CD14-positive monocyte (primary cell): ENCODE measurements at regions of chr14 and their contacts with region 1.

Region 1: GRCh38 chr14:89416002-89416995 is 734 bp downstream of the FOXN3 start:
- DNase-seq: peak; percentile 95 to 98 (median 96)
- H3K4me3 ChIP-seq: peak overlapping the region; percentile 89 to 95 (median 90)
- H3K4me3 Mint-ChIP-seq: peak overlapping the region; percentile 92 to 94
- H3K27ac ChIP-seq: peak overlapping the region; percentile 80 to 92
- H3K27ac Mint-ChIP-seq: peak overlapping the region; percentile 88 to 96 (median 93)
- H3K4me1 ChIP-seq: peaks cover 37 to 55% of the 10 kb centered on the region in 2 donors
- H3K4me1 Mint-ChIP-seq: peaks cover 56% of the 10 kb centered on the region
- H3K27me3 ChIP-seq: no peaks in the 10 kb centered on the region
- H3K27me3 Mint-ChIP-seq: peaks cover 0 to 2% (median 0%) of the 10 kb centered on the region in 3 donors
- CTCF ChIP-seq: no peak

Region 2: DNA sequence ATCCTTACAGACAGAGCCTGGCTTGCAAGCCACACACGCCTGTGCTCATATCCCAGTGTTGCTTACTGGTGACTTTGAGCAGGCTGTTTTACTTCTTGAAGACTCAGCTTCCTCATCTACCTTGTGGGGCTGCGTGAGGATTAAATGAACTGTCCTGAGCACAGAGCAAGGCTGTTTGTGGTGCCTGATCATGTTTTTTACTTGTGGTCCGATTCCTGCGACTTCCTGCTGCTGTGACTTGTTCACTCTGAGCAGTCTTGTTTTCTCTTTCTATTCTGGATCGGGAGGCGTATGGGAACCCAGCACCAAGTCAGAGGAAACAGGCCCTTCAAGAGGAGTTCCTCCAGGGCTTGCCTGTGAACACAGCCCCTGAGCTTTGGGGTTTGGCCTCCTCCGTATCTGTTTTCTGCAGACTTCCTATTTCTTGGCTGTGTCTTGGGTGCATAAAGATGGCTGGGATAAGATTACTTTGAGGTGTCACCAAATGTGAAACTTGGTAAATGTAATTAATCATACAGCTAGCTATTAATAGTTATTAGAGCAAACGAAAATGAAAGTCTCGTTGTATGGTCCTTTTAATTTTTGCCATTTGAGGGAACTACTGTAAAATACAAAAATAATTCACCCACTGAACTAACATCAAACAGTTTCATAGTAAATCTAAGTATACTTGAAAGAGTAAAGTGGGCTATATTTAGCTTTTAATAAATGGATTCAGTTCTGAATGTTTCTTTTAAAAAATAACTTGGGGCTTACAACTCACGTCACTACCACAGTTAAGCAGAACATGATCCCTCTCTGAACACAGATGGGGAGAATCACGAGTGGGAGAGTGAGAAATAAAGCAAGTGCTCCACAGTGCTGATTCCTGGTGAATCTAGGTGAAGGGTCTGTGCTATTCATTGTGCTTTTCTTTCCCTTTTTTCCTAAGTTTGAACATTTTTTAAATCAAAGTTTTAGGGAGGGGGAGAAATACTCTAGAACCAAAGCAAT is 250.8 kb before region 1 on chr14:
- intact Hi-C with region 1: no loop called
- DNase-seq: peak; percentile 34 to 45 (median 35)
- H3K4me3 ChIP-seq: peak overlapping the region; percentile 56 to 84 (median 75)
- H3K4me3 Mint-ChIP-seq: peak overlapping the region; percentile 80 to 95
- H3K27ac ChIP-seq: peak overlapping the region; percentile 78 to 88
- H3K27ac Mint-ChIP-seq: peak overlapping the region; percentile 91 to 98 (median 94)
- H3K4me1 ChIP-seq: peaks cover 33 to 42% of the 10 kb centered on the region in 2 donors
- H3K4me1 Mint-ChIP-seq: peaks cover 47% of the 10 kb centered on the region
- H3K27me3 ChIP-seq: no peaks in the 10 kb centered on the region
- H3K27me3 Mint-ChIP-seq: peaks cover 0 to 3% (median 1%) of the 10 kb centered on the region in 3 donors
- CTCF ChIP-seq: no peak

Region 3: GRCh38 chr14:89303457-89304435 is 112.6 kb before region 1 on chr14:
- intact Hi-C with region 1: loop called in 1 of 2 experiments (anchors 10 kb)
- DNase-seq: peak; percentile 74 to 84 (median 82)
- H3K4me3 ChIP-seq: peak overlapping the region in 2 of 3 experiments; percentile 40 to 68
- H3K4me3 Mint-ChIP-seq: peak overlapping the region; percentile 72 to 75
- H3K27ac ChIP-seq: peak overlapping the region; percentile 89 to 90
- H3K27ac Mint-ChIP-seq: peak overlapping the region; percentile 85 to 98 (median 93)
- H3K4me1 ChIP-seq: peaks cover 48 to 49% of the 10 kb centered on the region in 2 donors
- H3K4me1 Mint-ChIP-seq: peaks cover 59% of the 10 kb centered on the region
- H3K27me3 ChIP-seq: no peaks in the 10 kb centered on the region
- H3K27me3 Mint-ChIP-seq: peaks cover 0 to 2% (median 0%) of the 10 kb centered on the region in 3 donors
- CTCF ChIP-seq: no peak

Region 4: GRCh38 chr14:89455412-89455811 is 39.1 kb after region 1 on chr14:
- intact Hi-C with region 1: loop called in 1 of 2 experiments (anchors 5 kb)
- DNase-seq: no peak
- H3K4me3 ChIP-seq: no peak overlapping the region
- H3K4me3 Mint-ChIP-seq: no peak overlapping the region
- H3K27ac ChIP-seq: no peak overlapping the region
- H3K27ac Mint-ChIP-seq: peak overlapping the region in 1 of 7 donors; percentile 55
- H3K4me1 ChIP-seq: peaks cover 44 to 50% of the 10 kb centered on the region in 2 donors
- H3K4me1 Mint-ChIP-seq: peaks cover 55% of the 10 kb centered on the region
- H3K27me3 ChIP-seq: no peaks in the 10 kb centered on the region
- H3K27me3 Mint-ChIP-seq: peaks cover 0 to 1% (median 0%) of the 10 kb centered on the region in 3 donors
- CTCF ChIP-seq: no peak

Region 5: GRCh38 chr14:89618811-89619551 is 202.7 kb after region 1 on chr14:
- intact Hi-C with region 1: loop called (anchors 5 to 10 kb)
- DNase-seq: peak; percentile 50 to 54 (median 52)
- H3K4me3 ChIP-seq: peak overlapping the region; percentile 88 to 100 (median 96)
- H3K4me3 Mint-ChIP-seq: peak overlapping the region; percentile 88 to 96
- H3K27ac ChIP-seq: peak overlapping the region in 1 of 2 donors; percentile 90
- H3K27ac Mint-ChIP-seq: peak overlapping the region; percentile 81 to 93 (median 88)
- H3K4me1 ChIP-seq: peaks cover 29 to 47% of the 10 kb centered on the region in 2 donors
- H3K4me1 Mint-ChIP-seq: peaks cover 57% of the 10 kb centered on the region
- H3K27me3 ChIP-seq: no peaks in the 10 kb centered on the region
- H3K27me3 Mint-ChIP-seq: peaks cover 1 to 6% (median 2%) of the 10 kb centered on the region in 3 donors
- CTCF ChIP-seq: no peak

Region 6: DNA sequence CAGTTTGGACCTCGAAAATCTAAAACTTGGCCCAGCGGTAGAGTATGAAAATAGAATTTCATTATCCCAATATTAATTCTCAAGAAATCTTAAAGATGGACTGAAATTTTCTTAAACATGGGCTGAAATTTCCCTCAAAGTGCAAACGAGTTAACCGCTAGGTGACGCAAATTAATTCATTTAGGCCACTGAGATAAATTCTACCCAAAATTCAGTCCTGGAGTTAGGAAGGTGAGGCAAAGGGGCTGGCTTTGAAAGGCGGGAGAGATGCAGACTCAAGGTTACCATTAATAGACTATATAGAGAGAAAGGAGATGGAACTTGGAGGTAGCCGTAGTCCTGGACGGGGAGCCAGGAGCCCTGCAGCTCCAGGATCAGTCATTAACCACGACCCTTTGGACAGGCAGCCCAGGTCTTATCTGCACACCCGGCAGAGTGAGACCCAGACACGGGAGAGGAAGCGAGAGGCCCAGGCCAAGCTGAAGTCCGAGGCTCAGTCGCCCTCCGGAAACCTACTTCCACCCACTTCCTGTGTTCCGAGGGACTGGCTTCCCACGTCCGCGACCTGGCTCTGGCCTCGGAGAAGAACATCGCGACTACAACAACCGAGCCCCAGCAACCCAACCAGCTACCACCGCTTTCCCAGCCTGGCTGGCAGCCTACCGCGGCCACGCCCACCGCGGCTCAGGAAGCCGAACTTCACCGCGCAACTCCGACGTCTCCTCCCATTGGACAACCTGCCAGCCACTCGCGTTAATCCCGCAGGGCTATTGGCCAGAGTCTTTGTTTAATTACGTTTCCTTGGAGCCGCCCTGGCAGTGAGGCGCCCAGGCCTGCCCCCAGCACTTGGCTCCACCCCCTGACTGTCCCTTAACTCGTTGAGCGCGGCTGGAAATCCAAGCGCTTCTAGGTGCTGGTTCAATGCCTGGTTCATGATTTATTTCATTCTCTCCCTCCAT is 538.0 kb after region 1 on chr14 and contains the start of gene EFCAB11:
- intact Hi-C with region 1: loop called in 1 of 2 experiments (anchors 10 kb)
- DNase-seq: peak; percentile 95 to 97 (median 95)
- H3K4me3 ChIP-seq: peak within 1 kb of the TSS; percentile 75 to 90 (median 76)
- H3K4me3 Mint-ChIP-seq: peak within 1 kb of the TSS; percentile 96 to 100
- H3K27ac ChIP-seq: peak within 1 kb of the TSS; percentile 97 to 99
- H3K27ac Mint-ChIP-seq: peak within 1 kb of the TSS; percentile 92 to 97 (median 96)
- H3K4me1 ChIP-seq: peaks cover 20 to 22% of the 10 kb centered on the region in 2 donors
- H3K4me1 Mint-ChIP-seq: peaks cover 31% of the 10 kb centered on the region
- H3K27me3 ChIP-seq: no peaks in the 10 kb centered on the region
- H3K27me3 Mint-ChIP-seq: peaks cover 0 to 3% (median 0%) of the 10 kb centered on the region in 3 donors
- CTCF ChIP-seq: no peak
- polyA plus RNA-seq, gene EFCAB11: 2.0 to 4.3 (median 2.1) TPM